Panc1 (cell line): ENCODE measurements at regions of chr2 and their contacts with region 1.

Region 1: GRCh38 chr2:46967990-46968647 is 52.5 kb upstream of the MCFD2 start:
- DNase-seq: no peak
- ATAC-seq: peak; percentile 86
- H3K4me3 ChIP-seq: peak overlapping the region in 1 of 2 experiments; percentile 19; a peak in 2 of 4 replicates
- H3K27ac ChIP-seq: peak overlapping the region; percentile 58
- H3K4me1 ChIP-seq: peaks cover 10% of the 10 kb centered on the region
- H3K27me3 ChIP-seq: no peaks in the 10 kb centered on the region
- CTCF ChIP-seq: no peak

Region 2: GRCh38 chr2:46601328-46601963 is 366.7 kb before region 1 on chr2:
- CTCF ChIA-PET with region 1: no interaction called
- POLR2A ChIA-PET with region 1: no interaction called
- in situ Hi-C with region 1: no loop called
- intact Hi-C with region 1: no loop called
- DNase-seq: no peak
- ATAC-seq: no peak
- H3K4me3 ChIP-seq: no peak overlapping the region
- H3K27ac ChIP-seq: no peak overlapping the region
- H3K4me1 ChIP-seq: no peaks in the 10 kb centered on the region
- H3K27me3 ChIP-seq: no peaks in the 10 kb centered on the region
- CTCF ChIP-seq: peak; percentile 53; the same call in 1 of the 2 replicates

Region 3: GRCh38 chr2:46943881-46944798 is 24.0 kb before region 1 on chr2:
- CTCF ChIA-PET with region 1: no interaction called
- POLR2A ChIA-PET with region 1: no interaction called
- in situ Hi-C with region 1: no loop called
- intact Hi-C with region 1: no loop called
- DNase-seq: no peak
- ATAC-seq: no peak
- H3K4me3 ChIP-seq: no peak overlapping the region
- H3K27ac ChIP-seq: no peak overlapping the region
- H3K4me1 ChIP-seq: peaks cover 17% of the 10 kb centered on the region
- H3K27me3 ChIP-seq: no peaks in the 10 kb centered on the region
- CTCF ChIP-seq: no peak

Region 4: GRCh38 chr2:47031909-47032682 is 64.0 kb after region 1 on chr2:
- CTCF ChIA-PET with region 1: no interaction called
- POLR2A ChIA-PET with region 1: interaction called, 18 read pairs
- in situ Hi-C with region 1: no loop called
- intact Hi-C with region 1: no loop called
- DNase-seq: no peak
- ATAC-seq: no peak
- H3K4me3 ChIP-seq: no peak overlapping the region
- H3K27ac ChIP-seq: peak overlapping the region; percentile 81
- H3K4me1 ChIP-seq: peaks cover 64% of the 10 kb centered on the region
- H3K27me3 ChIP-seq: no peaks in the 10 kb centered on the region
- CTCF ChIP-seq: no peak

Region 5: DNA sequence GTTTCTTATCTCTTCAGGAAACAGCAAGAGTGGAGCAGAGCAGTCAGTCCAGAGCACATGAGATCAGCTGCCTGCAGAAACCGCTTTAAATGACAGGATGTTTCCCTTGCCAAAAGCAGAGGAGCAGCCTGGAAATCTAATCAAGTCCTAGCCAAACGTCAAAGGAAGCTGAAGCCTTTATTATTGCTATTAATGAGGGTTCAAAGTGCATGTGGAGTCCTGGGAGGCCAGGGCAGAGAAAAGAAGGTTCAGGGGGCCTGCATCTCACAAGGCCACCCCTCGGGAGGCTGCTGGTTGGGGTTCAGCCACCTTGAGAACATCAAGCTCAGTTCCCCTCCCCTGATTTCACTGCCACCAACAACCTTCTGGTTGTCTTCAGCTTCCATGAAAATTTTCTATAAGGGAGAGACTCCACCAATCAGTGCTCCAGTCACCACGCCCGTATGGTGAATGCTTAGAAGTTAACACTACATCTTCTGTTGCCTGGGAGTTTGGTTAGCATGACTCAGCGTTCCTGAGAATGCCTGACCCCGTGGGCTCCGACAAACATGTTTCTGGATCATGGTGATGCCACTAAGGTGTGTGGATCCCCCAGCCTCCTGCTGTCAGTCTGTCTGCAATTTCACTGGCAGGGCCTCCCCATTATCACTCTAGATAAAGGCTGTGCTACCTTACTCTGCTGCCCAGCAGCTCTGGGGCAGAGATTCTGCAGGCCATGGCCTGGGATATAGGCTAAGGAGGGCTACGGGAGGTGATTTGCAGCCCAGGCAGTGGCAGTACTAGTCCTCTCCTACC is 120.7 kb after region 1 on chr2:
- CTCF ChIA-PET with region 1: no interaction called
- POLR2A ChIA-PET with region 1: no interaction called
- in situ Hi-C with region 1: no loop called
- intact Hi-C with region 1: no loop called
- DNase-seq: no peak
- ATAC-seq: peak; percentile 43; the same call in 1 of the 2 replicates
- H3K4me3 ChIP-seq: no peak overlapping the region
- H3K27ac ChIP-seq: no peak overlapping the region; the same call in 1 of the 2 replicates
- H3K4me1 ChIP-seq: no peaks in the 10 kb centered on the region
- H3K27me3 ChIP-seq: no peaks in the 10 kb centered on the region
- CTCF ChIP-seq: no peak

Region 6: DNA sequence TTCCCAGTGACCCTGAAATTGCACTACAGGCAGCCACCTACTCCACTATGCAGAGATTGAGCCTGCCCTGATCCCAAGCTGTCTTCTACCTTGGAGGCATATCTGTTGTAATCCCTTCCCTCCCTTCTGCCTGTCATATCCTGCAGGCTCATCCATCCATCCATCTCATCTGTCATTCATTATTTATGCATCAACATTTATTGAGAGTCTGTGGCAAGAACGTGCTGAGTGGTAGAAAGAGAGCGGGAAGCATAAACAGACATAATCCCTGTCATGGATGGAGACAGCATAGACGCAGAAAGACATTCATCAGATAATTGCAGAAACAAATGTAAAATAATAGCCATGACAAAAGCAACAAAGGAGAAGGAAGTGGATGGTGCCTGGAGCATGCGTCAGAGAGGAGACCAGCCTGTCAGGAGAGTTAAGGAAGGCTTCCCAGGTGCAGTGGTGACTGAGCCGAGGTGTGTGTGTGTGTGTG is 297.7 kb after region 1 on chr2:
- CTCF ChIA-PET with region 1: no interaction called
- POLR2A ChIA-PET with region 1: interaction called, 11 read pairs
- in situ Hi-C with region 1: no loop called
- intact Hi-C with region 1: no loop called
- DNase-seq: no peak
- ATAC-seq: no peak
- H3K4me3 ChIP-seq: no peak overlapping the region
- H3K27ac ChIP-seq: no peak overlapping the region; the same call in 1 of the 2 replicates
- H3K4me1 ChIP-seq: peaks cover 17% of the 10 kb centered on the region; the same call in 1 of the 2 replicates
- H3K27me3 ChIP-seq: no peaks in the 10 kb centered on the region
- CTCF ChIP-seq: no peak

Region 7: DNA sequence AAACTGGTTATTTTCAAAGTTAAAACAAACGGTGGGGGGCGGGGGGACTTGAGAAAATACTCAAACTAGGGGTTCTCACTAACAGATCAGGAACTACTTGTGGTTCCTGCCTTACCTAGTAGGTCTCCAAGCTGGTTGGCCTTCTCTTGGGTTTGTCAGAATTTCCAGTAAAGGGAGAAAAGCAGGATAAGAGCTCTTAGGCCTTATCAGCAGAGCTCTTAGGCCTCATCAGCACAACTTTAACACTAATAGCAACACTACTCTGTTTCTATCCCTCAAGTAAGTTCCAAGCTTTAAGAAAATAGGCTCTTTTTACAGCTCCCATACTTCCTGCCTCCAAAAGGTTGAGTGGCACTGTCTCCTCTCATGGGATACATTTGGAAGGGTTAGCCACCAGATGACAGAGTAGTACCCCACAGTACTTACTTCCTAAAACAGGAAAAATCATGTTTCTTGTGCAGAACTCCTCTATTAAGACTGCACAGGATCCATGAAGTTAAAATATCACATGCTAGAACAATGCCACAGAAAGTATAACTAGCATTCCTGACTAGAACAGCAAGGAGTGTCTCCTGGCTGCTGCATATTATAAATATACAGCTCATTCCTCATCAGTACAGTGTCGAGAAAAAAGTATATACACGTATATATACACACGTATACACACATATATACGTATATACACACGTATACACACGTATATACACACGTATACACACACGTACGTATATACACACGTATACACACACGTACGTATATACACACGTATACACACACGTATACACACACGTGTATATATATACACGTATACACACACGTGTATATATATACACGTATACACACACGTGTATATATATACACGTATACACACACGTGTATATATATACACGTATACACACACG is 932.0 kb after region 1 on chr2:
- CTCF ChIA-PET with region 1: no interaction called
- POLR2A ChIA-PET with region 1: interaction called, 22 read pairs
- in situ Hi-C with region 1: no loop called
- intact Hi-C with region 1: no loop called
- DNase-seq: no peak
- ATAC-seq: no peak
- H3K4me3 ChIP-seq: no peak overlapping the region
- H3K27ac ChIP-seq: no peak overlapping the region
- H3K4me1 ChIP-seq: peaks cover 17% of the 10 kb centered on the region
- H3K27me3 ChIP-seq: no peaks in the 10 kb centered on the region
- CTCF ChIP-seq: no peak